ENCODE measurements at regions of chr4 and their contacts with region 1.

Region 1: GRCh38 chr4:81471588-81472288 is at the start of gene RASGEF1B:
- DNase-seq: peak; percentile 96
- H3K4me3 Mint-ChIP-seq: peak within 1 kb of the TSS; percentile 88
- H3K27ac Mint-ChIP-seq: peak within 1 kb of the TSS; percentile 78
- H3K4me1 Mint-ChIP-seq: peaks cover 32% of the 10 kb centered on the region
- H3K27me3 Mint-ChIP-seq: no peaks in the 10 kb centered on the region
- total RNA-seq, gene RASGEF1B: 4.4 to 4.6 TPM

Region 2: GRCh38 chr4:81405894-81406401 is 65.8 kb before region 1 on chr4:
- CTCF ChIA-PET with region 1: interaction called, 4 read pairs
- POLR2A ChIA-PET with region 1: no interaction called
- intact Hi-C with region 1: loop called (anchors 1 kb)
- DNase-seq: peak; percentile 13
- H3K4me3 Mint-ChIP-seq: peak overlapping the region; percentile 4
- H3K27ac Mint-ChIP-seq: no peak overlapping the region
- H3K4me1 Mint-ChIP-seq: peaks cover 5% of the 10 kb centered on the region
- H3K27me3 Mint-ChIP-seq: no peaks in the 10 kb centered on the region

Region 3: GRCh38 chr4:81505004-81505598 is 33.4 kb after region 1 on chr4:
- CTCF ChIA-PET with region 1: interaction called, 4 read pairs
- POLR2A ChIA-PET with region 1: interaction called, 4 read pairs
- intact Hi-C with region 1: loop called (anchors 1 kb)
- DNase-seq: peak; percentile 82
- H3K4me3 Mint-ChIP-seq: peak overlapping the region; percentile 31
- H3K27ac Mint-ChIP-seq: peak overlapping the region; percentile 18
- H3K4me1 Mint-ChIP-seq: peaks cover 30% of the 10 kb centered on the region
- H3K27me3 Mint-ChIP-seq: no peaks in the 10 kb centered on the region

Region 4: DNA sequence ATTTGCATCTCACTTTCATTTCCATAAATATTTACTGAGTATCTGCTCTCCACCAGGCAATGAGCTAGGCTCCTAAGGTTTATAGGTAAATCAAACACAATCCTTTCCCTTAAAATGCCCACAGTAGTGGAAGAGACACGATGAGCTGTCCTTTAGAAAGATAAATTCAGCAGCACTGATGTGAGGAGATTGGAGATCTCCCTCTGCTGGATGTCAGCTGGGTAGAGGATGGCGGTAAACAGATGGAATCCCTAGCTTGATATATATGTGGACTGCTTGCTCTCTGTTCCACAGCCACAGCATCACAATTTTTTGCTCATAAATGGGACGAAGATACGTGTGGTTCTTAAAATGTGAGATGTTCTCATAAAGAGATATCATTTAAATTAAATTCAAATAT is 216.3 kb after region 1 on chr4:
- CTCF ChIA-PET with region 1: interaction called, 22 read pairs
- POLR2A ChIA-PET with region 1: no interaction called
- intact Hi-C with region 1: no loop called
- DNase-seq: no peak
- H3K4me3 Mint-ChIP-seq: no peak overlapping the region
- H3K27ac Mint-ChIP-seq: no peak overlapping the region
- H3K4me1 Mint-ChIP-seq: no peaks in the 10 kb centered on the region
- H3K27me3 Mint-ChIP-seq: peaks cover 12% of the 10 kb centered on the region

Region 5: GRCh38 chr4:81839347-81840042 is 367.8 kb after region 1 on chr4:
- CTCF ChIA-PET with region 1: interaction called, 183 read pairs
- POLR2A ChIA-PET with region 1: no interaction called
- intact Hi-C with region 1: loop called (anchors 1 kb)
- DNase-seq: no peak
- H3K4me3 Mint-ChIP-seq: no peak overlapping the region
- H3K27ac Mint-ChIP-seq: no peak overlapping the region
- H3K4me1 Mint-ChIP-seq: peaks cover 20% of the 10 kb centered on the region
- H3K27me3 Mint-ChIP-seq: no peaks in the 10 kb centered on the region

Region 6: GRCh38 chr4:82201805-82202641 is 730.3 kb after region 1 on chr4:
- CTCF ChIA-PET with region 1: interaction called, 11 read pairs
- POLR2A ChIA-PET with region 1: no interaction called
- intact Hi-C with region 1: loop called (anchors 5 kb)
- DNase-seq: peak; percentile 54
- H3K4me3 Mint-ChIP-seq: no peak overlapping the region
- H3K27ac Mint-ChIP-seq: no peak overlapping the region
- H3K4me1 Mint-ChIP-seq: no peaks in the 10 kb centered on the region
- H3K27me3 Mint-ChIP-seq: no peaks in the 10 kb centered on the region

Region 7: GRCh38 chr4:82373816-82374625 is 902.3 kb after region 1 on chr4 and contains the start of gene HNRNPD:
- CTCF ChIA-PET with region 1: no interaction called
- POLR2A ChIA-PET with region 1: no interaction called
- intact Hi-C with region 1: loop called (anchors 1 kb)
- DNase-seq: peak; percentile 96
- H3K4me3 Mint-ChIP-seq: peak within 1 kb of the TSS; percentile 97
- H3K27ac Mint-ChIP-seq: peak within 1 kb of the TSS; percentile 97
- H3K4me1 Mint-ChIP-seq: peaks cover 35% of the 10 kb centered on the region
- H3K27me3 Mint-ChIP-seq: no peaks in the 10 kb centered on the region
- total RNA-seq, gene HNRNPD: 398 to 400 TPM

Measured in activated CD4-positive, alpha-beta memory T cell treated with anti-CD3 and anti-CD28 coated beads for 36 hours (primary cell).